Motor neuron (in vitro differentiated cells): ENCODE measurements at regions of chr6 and their contacts with region 1.

Region 1: DNA sequence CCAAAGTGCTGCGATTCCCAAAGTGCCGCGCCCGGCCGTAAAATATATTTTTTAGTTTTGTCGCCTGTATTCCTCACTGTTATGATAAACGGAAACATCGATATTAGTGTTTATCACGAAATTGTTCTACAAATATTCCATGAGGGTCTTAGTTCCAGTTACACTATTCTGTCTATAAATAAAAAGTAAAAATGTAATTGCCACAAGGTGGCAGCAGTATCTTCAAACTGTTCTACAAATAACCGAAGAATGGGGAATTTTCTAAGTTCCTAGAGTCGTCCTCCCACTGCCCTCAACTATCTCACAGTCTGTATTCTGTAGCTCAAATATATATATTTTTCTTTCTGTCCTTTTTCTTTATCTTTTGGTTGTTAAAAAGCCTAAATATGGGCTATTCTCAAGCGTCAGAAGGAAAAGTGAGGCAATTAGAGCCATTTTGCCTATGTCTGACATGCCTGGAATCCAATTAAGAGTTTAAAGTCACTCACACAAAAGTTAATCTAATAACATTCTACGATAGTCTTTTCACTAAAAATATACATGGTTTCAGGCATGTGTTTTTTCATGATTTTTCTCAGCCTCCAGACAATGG is 14.2 kb upstream of the FAM162B start:
- ATAC-seq: peak in 3 of 8 experiments; percentile 44 to 76 (median 60)
- H3K4me3 ChIP-seq: no peak overlapping the region
- H3K27ac ChIP-seq: no peak overlapping the region
- H3K4me1 ChIP-seq: no peaks in the 10 kb centered on the region

Region 2: GRCh38 chr6:116648156-116648555 is 131.5 kb before region 1 on chr6:
- in situ Hi-C with region 1: no loop called
- ATAC-seq: no peak
- H3K4me3 ChIP-seq: no peak overlapping the region
- H3K27ac ChIP-seq: no peak overlapping the region
- H3K4me1 ChIP-seq: no peaks in the 10 kb centered on the region

Region 3: DNA sequence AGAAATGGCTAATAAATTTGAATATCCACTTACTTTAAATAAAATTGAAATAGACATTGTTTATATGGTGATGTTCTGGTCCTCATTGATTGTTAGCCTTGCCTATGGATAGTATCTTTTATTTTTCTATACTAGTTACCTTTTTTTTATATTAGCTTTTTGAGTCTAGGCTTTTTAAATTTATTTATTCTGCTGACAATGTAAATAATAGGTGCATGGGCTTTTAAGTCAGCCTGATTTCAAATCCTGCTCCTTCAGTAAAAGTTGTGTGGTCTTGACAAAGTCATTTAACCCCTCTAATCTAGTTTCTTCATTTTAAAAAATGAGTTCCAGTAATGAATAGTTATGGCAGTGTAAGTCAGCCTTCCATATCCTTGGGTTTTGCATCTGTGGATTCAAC is 52.7 kb before region 1 on chr6:
- in situ Hi-C with region 1: no loop called
- ATAC-seq: no peak
- H3K4me3 ChIP-seq: no peak overlapping the region
- H3K27ac ChIP-seq: no peak overlapping the region
- H3K4me1 ChIP-seq: no peaks in the 10 kb centered on the region

Region 4: DNA sequence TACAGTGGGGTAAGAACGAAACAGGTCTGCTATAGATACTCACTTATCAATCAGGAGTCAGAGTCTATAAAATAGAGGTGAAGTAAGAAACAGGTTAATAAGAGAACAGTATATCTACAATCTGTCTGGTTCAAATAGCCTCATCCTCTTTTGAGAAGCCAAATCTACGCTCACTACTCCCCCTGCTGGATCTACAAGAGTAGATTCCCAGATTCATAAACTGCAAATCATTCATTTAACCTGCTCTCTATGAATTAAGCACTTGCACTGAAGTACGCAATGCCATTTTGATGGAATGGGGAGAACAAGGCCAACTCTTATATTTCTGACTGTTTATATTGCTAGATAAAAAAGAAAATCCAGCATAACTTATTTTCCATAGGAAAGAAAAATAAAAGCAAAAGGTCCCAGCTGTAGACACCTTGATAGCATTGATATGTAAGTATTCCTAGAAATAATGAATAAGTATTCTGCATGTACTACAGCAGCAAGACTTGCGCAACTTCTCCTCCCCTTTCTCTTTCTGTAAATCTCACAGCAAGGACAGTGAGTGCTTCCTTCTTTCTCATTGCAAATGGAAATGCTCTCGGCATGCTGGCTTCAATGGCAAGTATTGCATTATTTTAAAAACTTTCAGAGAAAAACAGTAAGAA is 189.7 kb after region 1 on chr6:
- in situ Hi-C with region 1: loop called in 1 of 9 experiments (anchors 25 kb)
- ATAC-seq: peak; percentile 45 to 79 (median 59)
- H3K4me3 ChIP-seq: no peak overlapping the region
- H3K27ac ChIP-seq: no peak overlapping the region
- H3K4me1 ChIP-seq: peaks cover 0 to 4% of the 10 kb centered on the region in 2 donors